ENCODE measurements at regions of chr11 and their contacts with region 1.

Region 1: GRCh38 chr11:122781378-122782195 is 56.7 kb upstream of the CRTAM start:
- DNase-seq: peak; percentile 92
- ATAC-seq: peak; percentile 95
- H3K4me3 Mint-ChIP-seq: no peak overlapping the region
- H3K27ac Mint-ChIP-seq: no peak overlapping the region
- H3K4me1 Mint-ChIP-seq: peaks cover 18% of the 10 kb centered on the region
- H3K27me3 Mint-ChIP-seq: no peaks in the 10 kb centered on the region
- CTCF ChIP-seq: peak; percentile 85

Region 2: GRCh38 chr11:122578168-122578825 is 203.3 kb before region 1 on chr11:
- CTCF ChIA-PET with region 1: interaction called, 15 read pairs
- POLR2A ChIA-PET with region 1: no interaction called
- DNase-seq: no peak
- ATAC-seq: 0 out of 2 replicates have a peak, but pooled peaks have one; percentile 20
- H3K4me3 Mint-ChIP-seq: no peak overlapping the region
- H3K27ac Mint-ChIP-seq: no peak overlapping the region
- H3K4me1 Mint-ChIP-seq: peaks cover 10% of the 10 kb centered on the region
- H3K27me3 Mint-ChIP-seq: peaks cover 2% of the 10 kb centered on the region; the same call in 1 of the 2 replicates
- CTCF ChIP-seq: no peak

Region 3: GRCh38 chr11:122628810-122629555 is 152.6 kb before region 1 on chr11:
- CTCF ChIA-PET with region 1: interaction called, 57 read pairs
- POLR2A ChIA-PET with region 1: no interaction called
- DNase-seq: peak; percentile 81
- ATAC-seq: peak; percentile 98
- H3K4me3 Mint-ChIP-seq: no peak overlapping the region
- H3K27ac Mint-ChIP-seq: no peak overlapping the region
- H3K4me1 Mint-ChIP-seq: no peaks in the 10 kb centered on the region; the same call in 1 of the 2 replicates
- H3K27me3 Mint-ChIP-seq: no peaks in the 10 kb centered on the region; the same call in 1 of the 2 replicates
- CTCF ChIP-seq: peak; percentile 63; the same call in 1 of the 2 replicates

Region 4: DNA sequence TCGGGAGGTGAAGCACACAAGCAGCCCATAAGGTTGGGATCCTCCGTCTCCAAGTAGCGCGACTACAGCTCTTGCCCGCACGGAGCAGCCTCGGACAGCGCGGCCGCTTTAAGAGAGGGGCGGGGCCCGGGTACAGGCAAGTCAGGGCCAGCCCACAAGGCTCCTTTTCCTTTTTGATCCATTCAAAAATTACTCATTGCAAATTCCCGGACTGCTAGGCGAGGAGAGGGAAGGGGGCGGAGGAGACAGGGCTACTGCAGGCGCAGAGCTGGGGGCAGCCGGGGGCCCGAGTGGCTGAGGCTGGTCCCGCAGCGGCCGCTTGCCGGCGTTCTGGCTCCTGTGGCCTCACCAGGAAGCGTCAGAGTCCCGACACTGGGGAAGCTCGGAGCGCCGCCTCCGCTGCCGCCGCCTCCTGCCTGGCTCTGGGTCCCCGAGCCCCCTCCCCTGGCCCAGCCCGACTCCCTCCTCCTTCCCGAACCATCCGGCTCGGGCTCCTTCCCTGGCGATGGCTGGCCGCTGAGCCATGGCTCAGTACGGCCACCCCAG is 126.0 kb before region 1 on chr11 and contains the start of gene UBASH3B:
- CTCF ChIA-PET with region 1: interaction called, 33 read pairs
- POLR2A ChIA-PET with region 1: no interaction called
- DNase-seq: peak; percentile 82
- ATAC-seq: peak; percentile 88
- H3K4me3 Mint-ChIP-seq: peak within 1 kb of the TSS; percentile 93
- H3K27ac Mint-ChIP-seq: 0 out of 2 replicates have a peak within 1 kb of the TSS, but pooled peaks have one; percentile 41
- H3K4me1 Mint-ChIP-seq: peaks cover 21% of the 10 kb centered on the region
- H3K27me3 Mint-ChIP-seq: peaks cover 22% of the 10 kb centered on the region
- CTCF ChIP-seq: no peak
- total RNA-seq, gene UBASH3B: 18.9 to 22.6 TPM (median 21.1 TPM) in 3 replicates

Measured in WTC11 (cell line).